ENCODE measurements at regions of chr5 and their contacts with region 1.

Region 1: GRCh38 chr5:157948738-157949410 is 89.9 kb upstream of the CLINT1 start:
- DNase-seq: peak; percentile 94
- ATAC-seq: peak; percentile 94
- H3K4me3 Mint-ChIP-seq: no peak overlapping the region
- H3K27ac Mint-ChIP-seq: peak overlapping the region; percentile 91
- H3K4me1 Mint-ChIP-seq: peaks cover 49% of the 10 kb centered on the region
- H3K27me3 Mint-ChIP-seq: no peaks in the 10 kb centered on the region
- CTCF ChIP-seq: peak; percentile 67

Region 2: DNA sequence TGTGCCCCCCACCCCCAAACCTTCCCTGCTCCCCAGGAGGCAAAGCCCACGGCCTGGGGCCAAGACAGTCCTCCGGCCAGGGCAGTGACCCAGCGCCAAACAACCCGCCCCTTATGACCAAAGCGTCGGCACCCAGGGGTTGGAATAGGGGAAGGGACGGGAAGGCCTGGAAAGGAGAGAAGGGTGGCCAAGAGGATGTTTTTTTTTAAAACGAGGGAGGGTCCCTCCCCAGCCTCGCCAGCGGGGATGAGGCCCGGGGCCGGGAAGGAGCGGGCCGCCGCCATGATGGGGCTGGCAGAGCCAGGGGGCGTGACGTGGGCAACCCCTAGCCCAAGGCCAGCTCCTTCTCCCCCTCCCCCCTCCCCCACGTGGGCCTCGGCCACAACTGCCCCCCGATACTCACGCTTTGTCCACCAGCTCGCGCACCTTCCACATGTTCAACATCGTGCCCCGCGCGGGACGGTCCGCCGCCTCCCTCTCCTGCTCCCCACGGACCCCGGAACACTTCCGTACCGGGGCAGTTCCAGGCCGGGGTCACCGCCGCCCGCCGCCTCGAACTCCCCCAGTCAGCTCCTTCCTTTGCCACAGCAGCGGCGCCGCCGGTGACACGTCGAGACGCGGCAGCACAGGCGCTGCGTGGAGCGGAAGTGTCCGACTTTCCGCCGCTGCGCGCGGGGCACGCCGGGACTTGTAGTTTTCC is 90.2 kb before region 1 on chr5 and contains the start of gene CLINT1:
- CTCF ChIA-PET with region 1: interaction called, 25 read pairs
- POLR2A ChIA-PET with region 1: interaction called, 3 read pairs
- DNase-seq: peak; percentile 92
- ATAC-seq: peak; percentile 88
- H3K4me3 Mint-ChIP-seq: peak within 1 kb of the TSS; percentile 80
- H3K27ac Mint-ChIP-seq: peak within 1 kb of the TSS; percentile 93
- H3K4me1 Mint-ChIP-seq: peaks cover 51% of the 10 kb centered on the region
- H3K27me3 Mint-ChIP-seq: no peaks in the 10 kb centered on the region; the same call in 1 of the 2 replicates
- CTCF ChIP-seq: no peak
- total RNA-seq, gene CLINT1: 74.6 to 79.6 TPM (median 76.1 TPM) in 3 replicates

Region 3: DNA sequence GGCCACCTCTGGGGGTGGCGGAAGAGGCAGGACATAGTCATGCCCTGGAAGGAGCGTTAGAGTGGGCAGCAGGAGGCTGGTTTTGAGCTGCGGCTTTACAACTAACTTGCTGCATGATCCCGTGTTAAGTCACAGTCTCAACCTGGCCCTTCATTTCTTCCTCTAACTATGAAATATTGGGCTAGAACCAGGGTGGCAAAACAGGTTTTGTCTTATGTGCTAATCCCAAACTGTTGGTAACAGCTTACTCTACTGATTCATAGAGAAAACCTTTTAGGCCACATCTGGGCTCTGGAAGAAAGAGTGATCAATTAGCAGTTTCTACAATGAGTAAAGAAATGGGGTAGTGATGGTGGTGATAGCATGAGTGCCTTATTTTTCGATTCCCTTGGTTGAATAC is 15.9 kb before region 1 on chr5:
- CTCF ChIA-PET with region 1: interaction called, 10 read pairs
- POLR2A ChIA-PET with region 1: interaction called, 5 read pairs
- DNase-seq: no peak
- ATAC-seq: no peak
- H3K4me3 Mint-ChIP-seq: no peak overlapping the region
- H3K27ac Mint-ChIP-seq: no peak overlapping the region
- H3K4me1 Mint-ChIP-seq: no peaks in the 10 kb centered on the region
- H3K27me3 Mint-ChIP-seq: no peaks in the 10 kb centered on the region
- CTCF ChIP-seq: no peak

Region 4: GRCh38 chr5:157971571-157972216 is 22.8 kb after region 1 on chr5:
- CTCF ChIA-PET with region 1: interaction called, 15 read pairs
- POLR2A ChIA-PET with region 1: interaction called, 4 read pairs
- DNase-seq: peak; percentile 31
- ATAC-seq: peak; percentile 89
- H3K4me3 Mint-ChIP-seq: no peak overlapping the region
- H3K27ac Mint-ChIP-seq: peak overlapping the region; percentile 58; the same call in 1 of the 2 replicates
- H3K4me1 Mint-ChIP-seq: peaks cover 33% of the 10 kb centered on the region
- H3K27me3 Mint-ChIP-seq: no peaks in the 10 kb centered on the region
- CTCF ChIP-seq: no peak

Region 5: DNA sequence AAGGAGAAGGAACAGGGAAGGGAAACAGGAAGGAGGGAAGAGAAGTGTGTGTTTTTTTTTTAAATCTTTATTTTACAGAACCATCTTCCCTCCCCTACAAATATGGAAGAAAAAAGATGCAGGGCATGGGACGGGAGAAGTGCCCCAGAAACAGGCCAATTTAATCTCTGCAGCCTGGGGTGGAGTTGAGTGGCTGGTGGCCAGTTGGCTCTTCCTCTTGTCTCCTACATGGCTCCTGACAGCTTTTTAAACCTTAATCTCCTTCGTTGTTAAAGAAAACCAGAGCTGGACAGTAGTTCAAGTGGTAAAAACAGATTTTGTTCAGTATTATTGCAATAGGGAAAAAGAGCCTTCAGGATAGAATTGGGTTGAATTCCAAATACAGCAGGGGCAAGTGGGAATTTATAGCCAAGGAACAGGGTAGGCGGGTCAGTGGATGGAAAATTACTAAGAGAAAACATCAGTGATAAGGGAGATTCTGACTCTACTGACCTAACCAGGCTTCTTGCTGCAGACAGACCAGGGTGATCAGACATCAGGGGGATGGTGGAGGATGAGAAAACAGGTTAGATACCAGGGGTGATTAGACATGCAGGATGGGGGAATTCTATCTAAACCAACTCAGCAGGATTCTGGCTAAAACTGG is 35.2 kb after region 1 on chr5:
- CTCF ChIA-PET with region 1: no interaction called
- POLR2A ChIA-PET with region 1: no interaction called
- DNase-seq: no peak
- ATAC-seq: no peak
- H3K4me3 Mint-ChIP-seq: no peak overlapping the region
- H3K27ac Mint-ChIP-seq: no peak overlapping the region
- H3K4me1 Mint-ChIP-seq: no peaks in the 10 kb centered on the region
- H3K27me3 Mint-ChIP-seq: no peaks in the 10 kb centered on the region
- CTCF ChIP-seq: no peak

Measured in WTC11 (cell line).